Right cardiac atrium (tissue), 5 donors: ENCODE measurements at regions of chr15 and their contacts with region 1.

Region 1: DNA sequence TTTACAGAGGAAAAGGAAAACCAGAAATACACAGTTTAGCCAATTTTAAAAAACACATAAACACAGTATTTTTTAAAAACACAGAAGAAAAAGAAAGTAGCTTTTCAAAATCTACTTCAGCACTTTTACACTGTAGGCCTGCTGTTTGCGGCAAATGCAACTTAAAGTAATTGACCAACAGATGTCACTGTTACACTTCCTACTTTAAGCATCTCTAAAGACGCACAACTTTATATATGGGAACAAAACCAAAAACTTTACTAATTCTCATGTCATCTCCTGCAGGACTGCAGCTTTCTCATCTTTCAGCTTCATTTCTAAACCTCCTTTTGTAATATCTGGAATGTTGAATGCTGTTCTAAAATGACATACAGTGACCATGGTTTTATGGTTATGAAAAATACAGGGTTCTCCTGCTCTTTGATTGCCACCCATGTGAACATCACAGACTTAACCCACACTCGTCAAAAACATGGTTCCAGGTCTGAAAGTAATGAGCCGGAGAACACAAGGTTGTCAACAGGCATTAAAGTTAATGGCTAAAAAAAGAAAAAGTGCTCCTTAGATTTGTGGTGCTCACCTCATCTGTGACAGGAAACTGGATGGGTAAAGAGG is 107.9 kb downstream of the FMN1 start:
- DNase-seq: no peak
- ATAC-seq: no peak
- H3K4me3 ChIP-seq: no peak overlapping the region
- H3K27ac ChIP-seq: no peak overlapping the region
- H3K4me1 ChIP-seq: no peaks in the 10 kb centered on the region
- H3K27me3 ChIP-seq: no peaks in the 10 kb centered on the region

Region 2: GRCh38 chr15:33021806-33022389 is 64.7 kb before region 1 on chr15:
- intact Hi-C with region 1: loop called in 1 of 4 experiments (anchors 10 kb)
- DNase-seq: no peak
- ATAC-seq: peak; percentile 72 to 74
- H3K4me3 ChIP-seq: no peak overlapping the region
- H3K27ac ChIP-seq: no peak overlapping the region
- H3K4me1 ChIP-seq: peaks cover 3% of the 10 kb centered on the region
- H3K27me3 ChIP-seq: no peaks in the 10 kb centered on the region

Region 3: GRCh38 chr15:33700695-33701304 is 614.2 kb after region 1 on chr15:
- intact Hi-C with region 1: loop called in 2 of 4 experiments (anchors 5 to 10 kb)
- DNase-seq: peak; percentile 58 to 87 (median 80)
- ATAC-seq: peak; percentile 83 to 92
- H3K4me3 ChIP-seq: no peak overlapping the region
- H3K27ac ChIP-seq: no peak overlapping the region
- H3K4me1 ChIP-seq: no peaks in the 10 kb centered on the region
- H3K27me3 ChIP-seq: no peaks in the 10 kb centered on the region